Activated CD8-positive, alpha-beta T cell treated with anti-CD3 and anti-CD28 coated beads, Interleukin-2, amount 10 ng/mL, durations not matched to agents 7 days and 5 days (primary cell): ENCODE measurements at regions of chr3 and their contacts with region 1.

Region 1: GRCh38 chr3:114336122-114336697 is 42.4 kb downstream of the TIGIT start:
- DNase-seq: no peak
- ATAC-seq: no peak
- H3K4me3 Mint-ChIP-seq: no peak overlapping the region
- H3K27ac Mint-ChIP-seq: no peak overlapping the region
- H3K4me1 Mint-ChIP-seq: peaks cover 48% of the 10 kb centered on the region
- H3K27me3 Mint-ChIP-seq: no peaks in the 10 kb centered on the region

Region 2: GRCh38 chr3:114299421-114299820 is 36.8 kb before region 1 on chr3:
- CTCF ChIA-PET with region 1: interaction called, 11 read pairs
- POLR2A ChIA-PET with region 1: interaction called, 3 read pairs
- DNase-seq: peak; percentile 43
- ATAC-seq: peak; percentile 63
- H3K4me3 Mint-ChIP-seq: peak overlapping the region; percentile 12
- H3K27ac Mint-ChIP-seq: no peak overlapping the region
- H3K4me1 Mint-ChIP-seq: peaks cover 17% of the 10 kb centered on the region
- H3K27me3 Mint-ChIP-seq: no peaks in the 10 kb centered on the region

Region 3: DNA sequence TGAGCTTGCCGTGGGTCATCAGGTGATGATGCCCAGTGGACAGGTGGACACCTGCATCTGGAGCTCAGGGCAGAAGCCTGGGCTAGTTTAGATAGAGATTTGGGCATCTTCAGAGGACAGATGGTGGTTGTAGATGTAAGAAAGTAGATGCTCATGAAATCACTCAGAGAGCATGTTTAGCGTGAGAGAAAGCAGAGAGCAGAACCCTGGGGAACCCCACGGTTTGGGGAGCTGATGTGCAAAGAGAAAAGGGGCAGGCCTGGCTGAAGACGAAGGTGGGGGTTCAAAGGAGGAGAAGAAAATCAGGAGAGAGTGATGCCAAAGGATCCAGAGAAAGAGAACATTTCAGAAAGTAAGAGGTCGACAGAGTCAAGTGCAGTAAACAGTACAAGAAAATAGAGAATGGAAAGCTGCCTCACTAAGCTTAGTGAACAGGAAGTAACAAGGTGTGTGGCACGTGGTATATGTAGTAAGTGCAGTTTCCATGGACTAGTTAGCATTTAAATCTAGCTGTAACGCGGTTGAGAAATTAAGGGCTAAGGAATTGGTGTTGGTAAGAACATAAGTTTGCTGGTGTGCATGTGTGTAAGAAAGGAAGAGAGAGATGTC is 28.9 kb before region 1 on chr3:
- CTCF ChIA-PET with region 1: interaction called, 11 read pairs
- POLR2A ChIA-PET with region 1: no interaction called
- DNase-seq: no peak
- ATAC-seq: peak; percentile 58
- H3K4me3 Mint-ChIP-seq: peak overlapping the region; percentile 9
- H3K27ac Mint-ChIP-seq: peak overlapping the region; percentile 85
- H3K4me1 Mint-ChIP-seq: peaks cover 35% of the 10 kb centered on the region
- H3K27me3 Mint-ChIP-seq: no peaks in the 10 kb centered on the region

Region 4: GRCh38 chr3:114323546-114324254 is 12.5 kb before region 1 on chr3:
- CTCF ChIA-PET with region 1: interaction called, 16 read pairs
- POLR2A ChIA-PET with region 1: interaction called, 4 read pairs
- DNase-seq: no peak
- ATAC-seq: peak; percentile 51
- H3K4me3 Mint-ChIP-seq: no peak overlapping the region
- H3K27ac Mint-ChIP-seq: peak overlapping the region; percentile 25
- H3K4me1 Mint-ChIP-seq: peaks cover 47% of the 10 kb centered on the region
- H3K27me3 Mint-ChIP-seq: no peaks in the 10 kb centered on the region